ENCODE measurements at regions of chr4 and their contacts with region 1.

Region 1: DNA sequence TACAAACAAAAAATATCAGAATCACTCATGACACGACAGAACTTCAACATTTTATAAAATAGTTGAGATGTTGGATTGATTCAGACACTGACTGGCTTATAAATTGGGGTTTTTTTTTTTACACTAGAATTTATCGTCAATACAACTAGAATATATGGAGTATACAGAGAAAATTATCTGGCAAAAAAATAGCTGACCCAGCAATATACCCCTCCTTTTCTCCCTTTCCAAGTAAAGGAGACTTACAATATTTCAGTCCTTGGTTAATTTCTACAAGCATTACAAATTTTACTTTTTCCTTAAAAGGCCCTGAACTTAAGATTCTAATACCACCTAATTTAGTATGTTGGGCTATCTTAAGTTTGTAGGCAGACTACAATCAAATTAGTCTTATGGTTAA is 76.3 kb downstream of the LCORL start:
- DNase-seq: no peak
- ATAC-seq: no peak
- H3K4me3 ChIP-seq: no peak overlapping the region
- H3K4me3 Mint-ChIP-seq: no peak overlapping the region
- H3K27ac ChIP-seq: no peak overlapping the region
- H3K27ac Mint-ChIP-seq: no peak overlapping the region
- H3K4me1 ChIP-seq: no peaks in the 10 kb centered on the region
- H3K4me1 Mint-ChIP-seq: no peaks in the 10 kb centered on the region
- H3K27me3 ChIP-seq: no peaks in the 10 kb centered on the region
- H3K27me3 Mint-ChIP-seq: no peaks in the 10 kb centered on the region
- CTCF ChIP-seq: no peak

Region 2: GRCh38 chr4:16360701-16361262 is 1584.5 kb before region 1 on chr4:
- CTCF ChIA-PET with region 1: no interaction called
- POLR2A ChIA-PET with region 1: no interaction called
- intact Hi-C with region 1: loop called in 1 of 2 experiments (anchors 5 kb)
- DNase-seq: no peak
- ATAC-seq: no peak
- H3K4me3 ChIP-seq: no peak overlapping the region
- H3K4me3 Mint-ChIP-seq: no peak overlapping the region
- H3K27ac ChIP-seq: no peak overlapping the region
- H3K27ac Mint-ChIP-seq: no peak overlapping the region
- H3K4me1 ChIP-seq: no peaks in the 10 kb centered on the region
- H3K4me1 Mint-ChIP-seq: no peaks in the 10 kb centered on the region
- H3K27me3 ChIP-seq: no peaks in the 10 kb centered on the region
- H3K27me3 Mint-ChIP-seq: no peaks in the 10 kb centered on the region
- CTCF ChIP-seq: no peak

Region 3: DNA sequence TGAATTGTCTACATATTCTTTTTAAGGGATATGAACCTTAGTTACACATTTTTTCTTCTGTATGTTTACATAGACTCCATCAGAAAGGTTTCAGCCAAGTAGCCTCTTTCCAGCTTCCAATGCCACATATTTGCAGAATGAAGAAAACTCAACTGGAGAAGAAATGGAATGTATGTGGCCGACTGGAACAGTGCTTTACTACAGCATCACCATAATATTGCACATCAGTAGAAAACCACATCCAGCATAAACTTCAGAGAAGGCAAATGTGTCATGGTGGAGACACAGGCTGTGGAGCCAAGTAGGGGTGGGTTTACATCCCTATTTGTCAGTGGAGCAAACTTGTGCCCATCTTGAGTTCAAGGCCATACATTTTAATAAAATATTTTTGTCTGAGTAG is 842.1 kb before region 1 on chr4:
- CTCF ChIA-PET with region 1: no interaction called
- POLR2A ChIA-PET with region 1: no interaction called
- intact Hi-C with region 1: no loop called
- DNase-seq: no peak
- ATAC-seq: no peak
- H3K4me3 ChIP-seq: no peak overlapping the region
- H3K4me3 Mint-ChIP-seq: no peak overlapping the region
- H3K27ac ChIP-seq: no peak overlapping the region
- H3K27ac Mint-ChIP-seq: no peak overlapping the region
- H3K4me1 ChIP-seq: no peaks in the 10 kb centered on the region
- H3K4me1 Mint-ChIP-seq: no peaks in the 10 kb centered on the region
- H3K27me3 ChIP-seq: no peaks in the 10 kb centered on the region
- H3K27me3 Mint-ChIP-seq: no peaks in the 10 kb centered on the region
- CTCF ChIP-seq: no peak

Region 4: DNA sequence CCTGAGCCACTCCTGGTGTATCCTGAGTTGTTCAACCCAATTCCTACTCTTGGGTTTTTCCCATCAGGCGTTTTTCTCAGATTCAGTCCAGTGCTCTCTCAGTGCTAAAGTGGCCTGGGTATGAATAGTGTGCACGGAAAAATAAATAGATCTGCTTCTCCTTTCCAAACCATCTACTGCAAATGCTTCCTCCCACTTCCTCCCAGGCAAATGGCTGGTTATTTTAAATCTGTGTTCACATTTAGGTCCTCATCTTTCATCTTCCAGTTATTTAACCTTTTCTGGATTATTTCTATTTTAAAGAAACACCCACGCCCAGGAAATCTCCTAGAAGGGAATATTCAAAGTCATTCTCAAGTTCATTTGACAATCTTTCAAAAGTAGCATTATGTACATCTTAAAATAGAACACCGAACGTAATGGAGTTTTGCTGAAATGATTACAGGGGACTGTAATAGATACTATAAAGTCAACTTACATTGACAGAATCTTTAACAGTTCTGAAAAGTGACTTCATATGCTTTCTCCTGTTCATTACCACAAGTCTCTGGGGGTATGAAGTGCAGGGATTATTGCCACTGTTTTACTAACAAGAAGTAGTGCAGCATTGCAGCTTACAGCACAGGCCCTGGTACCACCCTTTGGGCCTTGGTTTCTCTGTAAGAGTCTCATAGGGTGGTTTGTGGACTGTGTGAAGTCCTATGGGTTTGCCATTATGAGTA is 264.6 kb before region 1 on chr4:
- CTCF ChIA-PET with region 1: no interaction called
- POLR2A ChIA-PET with region 1: no interaction called
- intact Hi-C with region 1: no loop called
- DNase-seq: no peak
- ATAC-seq: no peak
- H3K4me3 ChIP-seq: no peak overlapping the region
- H3K4me3 Mint-ChIP-seq: no peak overlapping the region
- H3K27ac ChIP-seq: no peak overlapping the region
- H3K27ac Mint-ChIP-seq: no peak overlapping the region
- H3K4me1 ChIP-seq: no peaks in the 10 kb centered on the region
- H3K4me1 Mint-ChIP-seq: no peaks in the 10 kb centered on the region
- H3K27me3 ChIP-seq: no peaks in the 10 kb centered on the region
- H3K27me3 Mint-ChIP-seq: peaks cover 8% of the 10 kb centered on the region
- CTCF ChIP-seq: no peak

Region 5: DNA sequence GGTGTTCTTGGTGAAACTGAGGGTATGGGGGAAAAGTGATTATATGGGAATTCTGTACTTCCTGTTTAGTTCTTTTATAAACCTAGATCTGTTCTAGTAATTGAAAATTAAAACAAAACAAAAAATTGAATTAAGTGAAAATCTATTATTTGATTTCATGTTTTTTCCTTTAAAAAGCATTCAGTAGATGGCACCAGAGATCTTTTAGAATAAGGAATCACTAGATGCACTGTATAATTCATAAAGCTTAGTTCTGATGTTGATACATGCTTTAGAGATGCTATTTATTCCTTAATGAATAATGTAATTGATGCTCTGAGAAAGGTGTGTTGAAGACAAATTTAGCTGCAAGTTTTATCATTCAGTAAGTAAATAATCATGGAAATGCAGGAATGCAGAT is 11.0 kb before region 1 on chr4:
- CTCF ChIA-PET with region 1: no interaction called
- POLR2A ChIA-PET with region 1: no interaction called
- intact Hi-C with region 1: no loop called
- DNase-seq: no peak
- ATAC-seq: no peak
- H3K4me3 ChIP-seq: no peak overlapping the region
- H3K4me3 Mint-ChIP-seq: no peak overlapping the region
- H3K27ac ChIP-seq: no peak overlapping the region
- H3K27ac Mint-ChIP-seq: no peak overlapping the region
- H3K4me1 ChIP-seq: no peaks in the 10 kb centered on the region
- H3K4me1 Mint-ChIP-seq: no peaks in the 10 kb centered on the region
- H3K27me3 ChIP-seq: no peaks in the 10 kb centered on the region
- H3K27me3 Mint-ChIP-seq: no peaks in the 10 kb centered on the region
- CTCF ChIP-seq: no peak

Region 6: GRCh38 chr4:18138076-18138665 is 192.9 kb after region 1 on chr4:
- CTCF ChIA-PET with region 1: no interaction called
- POLR2A ChIA-PET with region 1: no interaction called
- intact Hi-C with region 1: no loop called
- DNase-seq: no peak
- ATAC-seq: no peak
- H3K4me3 ChIP-seq: no peak overlapping the region
- H3K4me3 Mint-ChIP-seq: no peak overlapping the region
- H3K27ac ChIP-seq: no peak overlapping the region
- H3K27ac Mint-ChIP-seq: no peak overlapping the region
- H3K4me1 ChIP-seq: no peaks in the 10 kb centered on the region
- H3K4me1 Mint-ChIP-seq: no peaks in the 10 kb centered on the region
- H3K27me3 ChIP-seq: no peaks in the 10 kb centered on the region
- H3K27me3 Mint-ChIP-seq: peaks cover 6% of the 10 kb centered on the region
- CTCF ChIP-seq: no peak